ENCODE measurements at regions of chr11 and their contacts with region 1.

Region 1: DNA sequence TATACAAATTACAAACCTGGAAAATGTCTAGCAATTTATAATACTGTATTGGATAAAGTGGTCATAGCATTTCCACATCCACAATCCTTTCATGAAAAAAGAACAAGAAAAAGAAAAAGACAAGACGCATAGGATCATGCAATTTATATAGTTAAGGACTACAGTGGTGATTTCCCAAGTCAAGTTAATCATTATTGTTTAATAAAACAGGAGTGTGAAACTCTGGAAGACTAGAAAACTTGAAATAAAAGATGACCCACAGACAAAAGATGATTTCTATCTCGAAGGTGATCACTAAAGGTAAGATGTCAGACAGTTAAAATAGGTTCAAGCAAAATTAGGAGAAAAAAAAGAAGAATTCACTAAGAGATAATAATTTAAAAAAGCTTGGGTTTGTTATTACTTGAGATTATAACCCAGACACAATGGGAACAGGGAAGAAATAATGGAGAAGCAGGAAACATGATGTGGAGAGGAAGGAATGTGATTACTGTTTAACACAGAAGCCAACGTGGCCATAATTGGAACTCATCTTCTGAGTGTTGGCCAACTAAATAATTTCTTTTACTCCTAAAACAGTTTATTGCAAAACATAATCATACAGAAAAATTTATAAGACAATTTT is 441.2 kb upstream of the ANO3 start:
- DNase-seq: no peak
- ATAC-seq: no peak
- H3K4me3 ChIP-seq: no peak overlapping the region
- H3K27ac ChIP-seq: no peak overlapping the region
- H3K4me1 ChIP-seq: no peaks in the 10 kb centered on the region
- H3K27me3 ChIP-seq: no peaks in the 10 kb centered on the region
- CTCF ChIP-seq: no peak
- EP300 ChIP-seq: no peak
- POLR2A ChIP-seq: no peak
- RAD21 ChIP-seq: no peak

Region 2: DNA sequence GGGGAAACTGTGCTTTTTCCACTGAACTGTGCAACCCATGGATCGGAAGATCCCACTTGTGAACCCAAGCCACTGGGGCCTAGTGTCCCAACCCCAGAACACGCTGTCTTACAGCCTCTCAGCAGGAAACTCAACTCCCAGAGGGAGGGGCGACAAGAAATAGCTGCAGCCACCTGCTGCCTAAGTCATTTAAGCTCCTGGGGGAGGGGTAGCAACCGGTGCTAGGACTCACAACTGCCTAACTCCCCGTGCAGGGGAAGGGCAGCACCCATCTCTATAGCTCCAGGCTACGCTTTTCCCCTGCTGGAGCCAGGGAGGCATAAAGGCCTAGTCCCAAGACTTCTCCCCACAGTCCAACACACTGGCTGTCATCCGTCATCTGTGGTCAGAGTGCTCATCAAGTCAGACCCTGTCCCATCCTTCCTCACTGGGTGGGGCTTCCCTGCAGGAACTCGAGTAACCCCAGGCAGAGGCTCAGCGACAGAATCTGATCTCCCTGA is 1030.9 kb before region 1 on chr11:
- CTCF ChIA-PET with region 1: no interaction called
- POLR2A ChIA-PET with region 1: no interaction called
- in situ Hi-C with region 1: no loop called
- intact Hi-C with region 1: loop called (anchors 5 kb)
- DNase-seq: no peak
- ATAC-seq: no peak
- H3K4me3 ChIP-seq: no peak overlapping the region
- H3K27ac ChIP-seq: no peak overlapping the region
- H3K4me1 ChIP-seq: no peaks in the 10 kb centered on the region
- H3K27me3 ChIP-seq: no peaks in the 10 kb centered on the region
- CTCF ChIP-seq: no peak
- EP300 ChIP-seq: no peak
- POLR2A ChIP-seq: no peak
- RAD21 ChIP-seq: no peak